ENCODE measurements at regions of chr10 and their contacts with region 1.

Region 1: GRCh38 chr10:77974396-77975074 is 48.0 kb upstream of the DLG5 start:
- DNase-seq: peak; percentile 66
- ATAC-seq: peak; percentile 85
- H3K4me3 Mint-ChIP-seq: no peak overlapping the region
- H3K27ac Mint-ChIP-seq: peak overlapping the region; percentile 43; the same call in 1 of the 2 replicates
- H3K4me1 Mint-ChIP-seq: peaks cover 20% of the 10 kb centered on the region
- H3K27me3 Mint-ChIP-seq: no peaks in the 10 kb centered on the region
- CTCF ChIP-seq: peak; percentile 52

Region 2: DNA sequence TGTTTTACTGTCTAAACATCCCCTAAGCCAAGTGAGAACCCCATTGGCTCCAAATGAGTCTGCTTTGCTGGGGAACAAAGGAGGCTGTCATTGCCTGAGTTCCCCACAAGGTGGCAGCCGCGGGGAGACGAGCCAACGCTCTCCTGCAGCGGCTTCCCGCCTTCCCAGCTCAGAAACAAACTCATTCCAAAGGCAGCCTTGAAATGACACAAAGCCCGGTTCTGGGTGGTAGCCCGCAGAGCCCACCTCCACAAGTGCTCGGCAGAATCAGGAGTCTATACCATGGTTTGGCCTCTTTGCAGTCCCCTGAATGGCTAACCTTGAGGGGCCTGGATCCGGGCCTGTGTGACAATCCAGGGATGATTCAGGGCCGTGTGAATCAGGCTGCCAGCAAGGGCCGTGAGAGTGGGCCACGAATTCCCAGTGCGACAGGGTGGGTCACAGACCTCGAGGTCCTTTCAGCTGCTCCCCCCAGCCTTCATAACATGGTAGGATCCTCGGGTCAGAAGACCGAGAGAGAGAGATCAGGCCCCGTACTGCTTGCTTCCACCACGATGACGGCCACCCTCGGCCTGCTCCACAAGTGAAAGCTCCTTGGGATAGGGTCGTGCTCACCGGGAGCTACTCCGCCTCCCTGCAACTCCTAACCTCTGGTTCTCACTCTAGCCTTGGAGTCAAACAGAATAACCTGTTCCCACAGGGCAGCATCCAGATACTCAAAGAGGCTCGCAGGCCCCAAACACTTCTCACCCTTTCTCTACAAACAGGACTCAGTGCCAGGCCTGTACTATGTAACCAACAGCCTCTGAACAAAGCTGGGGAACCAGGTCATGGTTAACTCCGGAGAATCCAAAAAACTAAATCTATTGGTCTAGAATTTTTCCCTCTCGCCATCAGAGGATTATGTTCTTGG is 127.6 kb before region 1 on chr10:
- CTCF ChIA-PET with region 1: interaction called, 72 read pairs
- POLR2A ChIA-PET with region 1: interaction called, 3 read pairs
- DNase-seq: peak; percentile 86
- ATAC-seq: peak; percentile 60
- H3K4me3 Mint-ChIP-seq: no peak overlapping the region
- H3K27ac Mint-ChIP-seq: peak overlapping the region; percentile 84
- H3K4me1 Mint-ChIP-seq: peaks cover 64% of the 10 kb centered on the region
- H3K27me3 Mint-ChIP-seq: no peaks in the 10 kb centered on the region
- CTCF ChIP-seq: peak; percentile 96

Region 3: GRCh38 chr10:77907900-77908717 is 66.4 kb before region 1 on chr10:
- CTCF ChIA-PET with region 1: interaction called, 39 read pairs
- POLR2A ChIA-PET with region 1: no interaction called
- DNase-seq: peak; percentile 57
- ATAC-seq: peak; percentile 93
- H3K4me3 Mint-ChIP-seq: no peak overlapping the region
- H3K27ac Mint-ChIP-seq: peak overlapping the region; percentile 38; the same call in 1 of the 2 replicates
- H3K4me1 Mint-ChIP-seq: peaks cover 38% of the 10 kb centered on the region
- H3K27me3 Mint-ChIP-seq: no peaks in the 10 kb centered on the region
- CTCF ChIP-seq: no peak

Region 4: GRCh38 chr10:77939561-77940001 is 35.0 kb before region 1 on chr10:
- CTCF ChIA-PET with region 1: interaction called, 19 read pairs
- POLR2A ChIA-PET with region 1: no interaction called
- DNase-seq: no peak
- ATAC-seq: peak; percentile 24
- H3K4me3 Mint-ChIP-seq: no peak overlapping the region
- H3K27ac Mint-ChIP-seq: no peak overlapping the region
- H3K4me1 Mint-ChIP-seq: peaks cover 40% of the 10 kb centered on the region
- H3K27me3 Mint-ChIP-seq: peaks cover 3% of the 10 kb centered on the region
- CTCF ChIP-seq: no peak